Mammary epithelial cell (primary cell): ENCODE measurements at regions of chr19 and their contacts with region 1.

Region 1: GRCh38 chr19:51016798-51017683 is 2.5 kb downstream of the KLK10 start:
- DNase-seq: peak; percentile 87
- H3K4me3 ChIP-seq: peak overlapping the region; percentile 56 to 74 (median 70)
- H3K27ac ChIP-seq: peak overlapping the region; percentile 77
- H3K4me1 ChIP-seq: peaks cover 26% of the 10 kb centered on the region
- H3K27me3 ChIP-seq: no peaks in the 10 kb centered on the region
- CTCF ChIP-seq: peak; percentile 93 to 99

Region 2: GRCh38 chr19:50804420-50805272 is 212.4 kb before region 1 on chr19:
- CTCF ChIA-PET with region 1: no interaction called
- dilution Hi-C with region 1: no loop called
- in situ Hi-C with region 1: no loop called
- intact Hi-C with region 1: loop called (anchors 5 kb)
- DNase-seq: peak; percentile 98
- H3K4me3 ChIP-seq: peak overlapping the region; percentile 80 to 90 (median 83)
- H3K27ac ChIP-seq: peak overlapping the region; percentile 95
- H3K4me1 ChIP-seq: peaks cover 17% of the 10 kb centered on the region
- H3K27me3 ChIP-seq: no peaks in the 10 kb centered on the region
- CTCF ChIP-seq: no peak

Region 3: GRCh38 chr19:50835785-50836542 is 181.1 kb before region 1 on chr19:
- CTCF ChIA-PET with region 1: no interaction called
- dilution Hi-C with region 1: no loop called
- in situ Hi-C with region 1: no loop called
- intact Hi-C with region 1: no loop called
- DNase-seq: peak; percentile 67
- H3K4me3 ChIP-seq: peak overlapping the region; percentile 49 to 65 (median 60)
- H3K27ac ChIP-seq: no peak overlapping the region
- H3K4me1 ChIP-seq: peaks cover 13% of the 10 kb centered on the region
- H3K27me3 ChIP-seq: no peaks in the 10 kb centered on the region
- CTCF ChIP-seq: no peak

Region 4: GRCh38 chr19:50870417-50871089 is 146.5 kb before region 1 on chr19:
- CTCF ChIA-PET with region 1: no interaction called
- dilution Hi-C with region 1: no loop called
- in situ Hi-C with region 1: no loop called
- intact Hi-C with region 1: no loop called
- DNase-seq: no peak
- H3K4me3 ChIP-seq: no peak overlapping the region
- H3K27ac ChIP-seq: no peak overlapping the region
- H3K4me1 ChIP-seq: no peaks in the 10 kb centered on the region
- H3K27me3 ChIP-seq: peaks cover 12% of the 10 kb centered on the region
- CTCF ChIP-seq: no peak

Region 5: DNA sequence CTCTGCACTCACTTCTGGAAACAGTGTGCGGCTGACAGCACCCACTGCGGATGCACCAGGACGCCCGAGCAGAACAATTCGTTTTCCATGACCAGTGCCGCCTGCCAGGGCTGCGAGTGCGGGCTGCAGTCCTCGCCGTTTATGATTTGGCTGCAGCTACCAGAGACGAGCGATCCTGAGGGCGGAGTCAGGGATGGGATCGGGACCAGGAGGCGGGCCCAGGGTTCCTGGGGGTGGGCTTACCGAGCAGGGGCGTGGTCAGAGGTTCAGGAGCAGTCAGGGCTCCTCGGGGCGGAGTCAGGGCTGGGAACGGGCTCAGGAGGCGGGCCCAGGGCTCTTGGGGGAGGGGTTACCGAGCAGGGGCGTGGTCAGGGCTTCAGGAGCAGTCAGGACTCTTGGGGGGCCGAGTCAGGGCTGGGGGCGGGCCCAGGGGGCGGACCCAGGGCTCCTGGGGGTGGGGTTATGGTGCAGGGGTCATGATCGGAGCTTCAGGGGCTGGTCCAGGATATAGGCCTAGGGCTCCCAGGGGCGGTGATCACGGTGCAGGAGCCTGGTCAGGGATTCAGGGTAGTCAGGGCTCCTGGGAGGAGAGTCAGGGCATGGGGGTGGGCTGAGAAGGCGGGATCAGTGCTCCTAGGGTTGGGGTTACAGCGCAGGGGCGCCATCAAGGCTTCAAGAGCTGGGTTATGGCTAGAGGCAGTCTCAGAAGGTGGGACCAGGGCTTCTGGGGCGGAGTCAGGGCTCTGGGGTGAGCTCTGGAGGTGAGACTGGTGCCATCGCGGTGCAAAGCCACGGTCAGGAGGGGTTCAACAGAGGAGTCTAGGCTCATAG is 107.6 kb before region 1 on chr19:
- CTCF ChIA-PET with region 1: interaction called, 4 read pairs
- dilution Hi-C with region 1: no loop called
- in situ Hi-C with region 1: no loop called
- intact Hi-C with region 1: loop called (anchors 1 kb)
- DNase-seq: peak; percentile 39
- H3K4me3 ChIP-seq: peak overlapping the region in 2 of 3 experiments; percentile 2 to 35
- H3K27ac ChIP-seq: no peak overlapping the region
- H3K4me1 ChIP-seq: peaks cover 8% of the 10 kb centered on the region
- H3K27me3 ChIP-seq: peaks cover 20% of the 10 kb centered on the region
- CTCF ChIP-seq: no peak

Region 6: GRCh38 chr19:50952910-50953309 is 64.1 kb before region 1 on chr19 and contains the start of gene KLK5:
- CTCF ChIA-PET with region 1: interaction called, 3 read pairs
- dilution Hi-C with region 1: no loop called
- in situ Hi-C with region 1: no loop called
- intact Hi-C with region 1: loop called (anchors 1 kb)
- DNase-seq: peak; percentile 75
- H3K4me3 ChIP-seq: peak within 1 kb of the TSS; percentile 52 to 73 (median 56)
- H3K27ac ChIP-seq: peak within 1 kb of the TSS; percentile 84
- H3K4me1 ChIP-seq: peaks cover 15% of the 10 kb centered on the region
- H3K27me3 ChIP-seq: no peaks in the 10 kb centered on the region
- CTCF ChIP-seq: peak in 1 of 2 donors; percentile 29
- total RNA-seq, gene KLK5: 485 to 1,207 TPM

Region 7: GRCh38 chr19:51002542-51003171 is 14.4 kb before region 1 on chr19:
- CTCF ChIA-PET with region 1: interaction called, 33 read pairs
- dilution Hi-C with region 1: no loop called
- in situ Hi-C with region 1: no loop called
- intact Hi-C with region 1: loop called (anchors 2 kb)
- DNase-seq: peak; percentile 88
- H3K4me3 ChIP-seq: peak overlapping the region; percentile 36 to 69 (median 67)
- H3K27ac ChIP-seq: peak overlapping the region; percentile 84
- H3K4me1 ChIP-seq: peaks cover 47% of the 10 kb centered on the region
- H3K27me3 ChIP-seq: no peaks in the 10 kb centered on the region
- CTCF ChIP-seq: no peak

Region 8: GRCh38 chr19:51059715-51060114 is 42.7 kb after region 1 on chr19:
- CTCF ChIA-PET with region 1: no interaction called
- dilution Hi-C with region 1: no loop called
- in situ Hi-C with region 1: no loop called
- intact Hi-C with region 1: no loop called
- DNase-seq: no peak
- H3K4me3 ChIP-seq: no peak overlapping the region
- H3K27ac ChIP-seq: no peak overlapping the region
- H3K4me1 ChIP-seq: peaks cover 3% of the 10 kb centered on the region
- H3K27me3 ChIP-seq: no peaks in the 10 kb centered on the region
- CTCF ChIP-seq: no peak

Region 9: GRCh38 chr19:51097166-51097738 is 80.2 kb after region 1 on chr19:
- CTCF ChIA-PET with region 1: interaction called, 11 read pairs
- dilution Hi-C with region 1: no loop called
- in situ Hi-C with region 1: loop called (anchors 5 kb)
- intact Hi-C with region 1: loop called (anchors 1 kb)
- DNase-seq: peak; percentile 93
- H3K4me3 ChIP-seq: no peak overlapping the region
- H3K27ac ChIP-seq: no peak overlapping the region
- H3K4me1 ChIP-seq: peaks cover 13% of the 10 kb centered on the region
- H3K27me3 ChIP-seq: no peaks in the 10 kb centered on the region
- CTCF ChIP-seq: peak; percentile 67 to 75

Region 10: DNA sequence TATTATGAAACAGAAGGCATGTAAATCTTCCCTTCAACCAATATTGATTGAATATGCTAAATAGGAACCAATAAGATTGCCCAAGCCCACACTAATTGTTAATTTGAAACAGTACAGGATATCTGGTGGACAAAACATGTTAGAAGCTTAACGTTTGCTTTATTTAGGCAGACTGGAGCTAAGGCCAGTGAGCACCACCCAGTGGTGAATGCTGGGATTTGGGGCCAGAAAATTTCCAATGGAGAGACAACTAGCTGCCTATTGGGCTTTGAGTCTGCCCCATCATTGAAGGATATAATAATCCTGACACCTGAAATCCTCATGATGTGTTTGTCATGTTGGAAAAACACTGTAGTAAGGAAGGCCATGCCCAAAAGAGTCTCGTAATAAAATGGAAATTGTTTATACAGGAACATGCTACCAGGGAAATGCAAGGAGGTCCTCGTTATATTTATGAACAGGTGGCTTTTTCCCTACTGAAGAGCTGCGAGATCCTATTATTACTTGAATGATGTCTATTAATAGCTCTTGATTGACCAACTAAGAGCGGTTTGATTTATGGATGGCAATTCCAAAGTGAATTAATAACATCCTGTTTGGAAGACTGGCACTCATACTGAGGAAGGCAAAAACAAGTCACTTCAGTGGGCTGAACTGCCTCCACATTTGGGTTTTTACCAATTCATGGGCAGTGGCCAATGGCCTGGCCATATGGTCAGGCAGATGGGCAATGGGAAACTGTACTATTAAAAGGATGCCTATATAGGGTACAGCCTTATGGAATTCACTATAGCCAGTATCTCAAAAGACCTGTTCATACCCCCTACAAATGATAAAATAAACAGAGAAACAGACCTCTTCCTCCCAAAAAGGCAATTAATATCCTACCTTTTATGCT is 242.6 kb after region 1 on chr19:
- CTCF ChIA-PET with region 1: no interaction called
- dilution Hi-C with region 1: no loop called
- in situ Hi-C with region 1: no loop called
- intact Hi-C with region 1: loop called (anchors 10 kb)
- DNase-seq: peak; percentile 24
- H3K4me3 ChIP-seq: no peak overlapping the region
- H3K27ac ChIP-seq: no peak overlapping the region
- H3K4me1 ChIP-seq: no peaks in the 10 kb centered on the region
- H3K27me3 ChIP-seq: no peaks in the 10 kb centered on the region
- CTCF ChIP-seq: peak; percentile 80 to 83